Activated naive CD4-positive, alpha-beta T cell treated with anti-CD3 and anti-CD28 coated beads for 36 hours (primary cell): ENCODE measurements at regions of chr14 and their contacts with region 1.

Region 1: GRCh38 chr14:49940808-49941421 is 48.0 kb downstream of the ARF6 start:
- DNase-seq: no peak
- H3K4me3 Mint-ChIP-seq: no peak overlapping the region
- H3K27ac Mint-ChIP-seq: no peak overlapping the region
- H3K4me1 Mint-ChIP-seq: peaks cover 49% of the 10 kb centered on the region
- H3K27me3 Mint-ChIP-seq: no peaks in the 10 kb centered on the region

Region 2: DNA sequence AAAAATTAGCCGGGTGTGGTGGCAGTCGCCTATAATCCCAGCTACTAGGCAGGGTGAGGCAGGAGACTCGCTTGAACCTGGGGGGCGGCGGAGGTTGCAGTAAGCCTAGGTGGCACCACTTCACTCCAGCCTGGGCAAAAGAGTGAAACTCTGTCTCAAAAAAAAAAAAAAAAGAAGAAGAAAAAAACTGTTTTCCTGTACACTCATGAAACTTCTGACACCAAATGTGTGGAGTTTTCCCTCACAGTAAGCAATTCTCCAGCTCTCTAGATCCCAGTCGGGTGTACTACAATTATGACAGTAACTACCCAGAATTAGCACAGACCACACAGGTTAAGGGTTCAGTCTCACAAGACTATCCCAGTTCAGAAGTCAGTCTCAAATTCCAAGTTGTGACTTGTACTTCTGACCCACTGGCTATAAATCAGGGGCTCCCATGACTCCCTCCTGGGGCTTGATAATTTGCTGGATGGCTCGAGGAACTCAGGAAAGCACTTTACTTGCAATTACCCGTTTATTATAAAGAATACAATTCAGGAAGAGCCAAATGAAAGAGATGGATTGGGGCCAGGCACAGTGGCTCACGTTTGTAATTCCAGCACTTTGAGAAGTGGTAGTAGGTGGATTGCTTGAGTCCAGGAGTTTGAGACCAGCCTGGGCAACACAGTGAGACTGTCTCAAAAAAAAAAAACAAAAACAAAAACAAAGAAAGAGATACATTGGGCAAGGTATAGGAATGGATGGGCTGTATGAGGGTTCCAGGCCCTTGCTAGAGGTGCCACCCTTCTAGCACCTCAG is 60.4 kb before region 1 on chr14:
- CTCF ChIA-PET with region 1: no interaction called
- intact Hi-C with region 1: no loop called
- DNase-seq: peak; percentile 27
- H3K4me3 Mint-ChIP-seq: no peak overlapping the region
- H3K27ac Mint-ChIP-seq: no peak overlapping the region
- H3K4me1 Mint-ChIP-seq: peaks cover 17% of the 10 kb centered on the region
- H3K27me3 Mint-ChIP-seq: no peaks in the 10 kb centered on the region

Region 3: DNA sequence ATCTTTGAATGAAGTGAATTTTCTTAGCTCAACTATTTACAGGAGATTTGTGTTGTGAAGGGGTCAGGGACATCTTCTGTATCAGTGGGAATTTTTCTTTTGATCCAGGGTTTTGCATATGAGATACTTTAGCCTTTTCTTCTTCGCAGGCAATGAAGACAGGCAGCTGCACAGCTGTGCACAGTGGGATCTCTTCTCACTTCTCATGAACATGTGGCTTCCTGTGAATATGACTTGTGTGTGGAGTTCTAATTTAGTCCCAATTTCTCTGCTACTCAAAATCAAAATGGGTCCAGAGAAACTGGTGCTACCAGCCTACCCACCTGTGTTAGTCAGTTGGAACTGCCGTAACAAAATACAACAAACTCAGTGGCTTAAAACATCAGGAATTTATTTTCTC is 10.2 kb before region 1 on chr14:
- CTCF ChIA-PET with region 1: interaction called, 4 read pairs
- intact Hi-C with region 1: loop called (anchors 1 kb)
- DNase-seq: no peak
- H3K4me3 Mint-ChIP-seq: no peak overlapping the region
- H3K27ac Mint-ChIP-seq: no peak overlapping the region
- H3K4me1 Mint-ChIP-seq: peaks cover 4% of the 10 kb centered on the region
- H3K27me3 Mint-ChIP-seq: no peaks in the 10 kb centered on the region